ENCODE measurements at regions of chr4 and their contacts with region 1.

Region 1: DNA sequence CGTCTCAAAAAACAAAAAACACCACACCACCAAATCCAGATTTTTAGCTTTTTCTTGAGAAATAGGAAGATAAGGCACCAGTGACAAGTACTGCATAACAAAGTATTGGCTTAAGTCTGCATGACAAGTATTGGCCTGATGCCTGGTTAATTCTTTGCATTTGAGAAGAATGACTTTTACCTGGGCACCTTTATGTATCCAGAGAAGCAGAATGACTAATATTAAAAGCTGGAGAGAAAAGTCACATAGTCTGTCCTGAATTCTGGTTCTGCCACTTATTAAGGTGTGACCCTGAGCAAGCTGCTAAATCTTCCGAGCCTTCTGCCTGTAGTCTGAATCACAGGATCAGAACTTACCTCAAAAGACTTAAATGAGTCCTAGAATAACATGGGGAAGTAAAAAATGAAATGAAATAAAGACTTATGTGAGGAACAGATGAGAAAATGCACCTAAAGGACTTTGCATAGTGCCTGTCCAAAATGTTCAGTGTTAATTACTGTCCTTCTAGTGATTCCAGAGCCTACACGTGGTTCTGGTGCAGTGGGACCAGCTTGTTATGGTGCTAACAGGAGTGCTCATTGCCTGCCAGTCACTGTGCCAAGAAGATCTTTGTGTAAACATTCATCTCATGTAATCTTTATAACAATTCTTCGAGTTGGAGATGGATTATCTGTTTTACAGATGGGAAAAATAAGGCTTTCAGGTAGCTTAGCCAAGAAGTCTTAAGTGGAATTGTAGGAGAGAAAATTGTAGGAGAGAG is 31.6 kb downstream of the UGDH start:
- DNase-seq: no peak
- H3K4me3 ChIP-seq: no peak overlapping the region
- H3K27ac ChIP-seq: no peak overlapping the region
- H3K4me1 ChIP-seq: no peaks in the 10 kb centered on the region
- H3K27me3 ChIP-seq: no peaks in the 10 kb centered on the region
- CTCF ChIP-seq: no peak

Region 2: DNA sequence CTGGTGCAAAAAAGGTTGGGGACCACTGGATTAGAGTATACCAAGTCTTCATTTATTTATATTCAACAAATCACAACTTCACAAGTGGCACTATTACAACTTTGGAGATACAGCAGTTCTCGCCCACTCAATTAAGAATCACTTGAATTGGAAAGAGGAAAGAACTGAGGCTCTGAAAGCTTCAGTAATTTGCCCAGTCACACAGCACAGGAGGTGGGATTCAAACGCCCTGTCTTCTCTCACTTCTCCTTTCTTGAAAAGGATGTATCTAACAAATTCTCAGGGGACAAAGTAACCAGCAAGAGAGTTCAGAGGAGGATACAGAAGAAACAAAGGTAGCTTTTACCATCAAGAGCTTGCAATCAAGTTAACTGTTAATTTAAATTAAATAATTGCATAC is 130.6 kb after region 1 on chr4:
- CTCF ChIA-PET with region 1: no interaction called
- POLR2A ChIA-PET with region 1: interaction called, 18 read pairs
- intact Hi-C with region 1: no loop called
- DNase-seq: no peak
- H3K4me3 ChIP-seq: no peak overlapping the region
- H3K27ac ChIP-seq: no peak overlapping the region
- H3K4me1 ChIP-seq: peaks cover 4% of the 10 kb centered on the region
- H3K27me3 ChIP-seq: no peaks in the 10 kb centered on the region
- CTCF ChIP-seq: no peak